Cardiac septum (tissue), 1 donor: ENCODE measurements at regions of chr17 and their contacts with region 1.

Region 1: GRCh38 chr17:40068917-40069750 is 6.4 kb downstream of the THRA start:
- DNase-seq: peak; percentile 95

Region 2: DNA sequence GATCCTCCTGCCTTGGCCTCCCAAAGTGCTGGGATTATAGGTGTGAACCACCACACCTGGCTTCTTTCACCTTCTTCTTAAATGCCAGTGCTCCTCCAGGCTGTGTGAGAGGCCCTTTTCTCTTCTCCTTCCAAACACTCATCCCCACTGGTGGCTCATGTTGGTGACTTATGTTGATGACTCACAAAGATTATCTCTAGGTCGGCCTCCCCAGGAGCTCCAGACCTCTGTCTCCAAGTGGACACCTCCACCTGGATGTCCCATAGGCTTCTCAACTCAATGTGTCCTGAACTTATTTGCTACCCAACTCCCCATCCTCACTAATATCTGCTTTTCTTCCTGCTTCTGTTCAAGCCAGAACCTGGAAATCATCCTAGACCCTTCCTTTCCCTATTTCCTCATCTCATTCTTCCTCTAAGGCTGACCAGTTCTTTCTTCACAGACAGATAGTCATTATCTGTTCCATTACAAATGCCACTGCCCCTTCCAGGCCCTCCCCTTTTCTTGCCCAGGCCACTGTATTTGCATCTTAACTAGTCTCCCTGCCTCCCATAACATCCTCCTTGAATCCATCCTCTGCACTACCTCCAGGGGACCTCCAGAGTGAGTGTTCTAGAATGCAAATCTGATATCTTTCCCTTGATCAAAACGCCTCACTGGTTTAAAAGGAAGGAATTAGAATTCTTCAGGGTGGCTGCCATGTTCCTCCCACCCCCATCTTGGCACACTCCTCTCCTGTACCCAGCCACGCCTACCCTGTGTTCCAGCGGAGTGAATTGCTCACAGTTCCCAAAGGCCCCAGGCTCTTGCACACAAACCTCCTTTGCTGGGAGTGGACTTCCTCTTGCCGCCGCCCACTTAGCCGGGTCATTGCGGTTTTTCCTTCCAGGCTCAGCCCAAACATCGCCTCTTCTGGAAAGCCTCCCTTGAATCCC is 1067.2 kb before region 1 on chr17:
- intact Hi-C with region 1: no loop called
- DNase-seq: peak; percentile 91

Region 3: GRCh38 chr17:39952680-39953470 is 116.3 kb before region 1 on chr17:
- intact Hi-C with region 1: no loop called
- DNase-seq: peak; percentile 100

Region 4: DNA sequence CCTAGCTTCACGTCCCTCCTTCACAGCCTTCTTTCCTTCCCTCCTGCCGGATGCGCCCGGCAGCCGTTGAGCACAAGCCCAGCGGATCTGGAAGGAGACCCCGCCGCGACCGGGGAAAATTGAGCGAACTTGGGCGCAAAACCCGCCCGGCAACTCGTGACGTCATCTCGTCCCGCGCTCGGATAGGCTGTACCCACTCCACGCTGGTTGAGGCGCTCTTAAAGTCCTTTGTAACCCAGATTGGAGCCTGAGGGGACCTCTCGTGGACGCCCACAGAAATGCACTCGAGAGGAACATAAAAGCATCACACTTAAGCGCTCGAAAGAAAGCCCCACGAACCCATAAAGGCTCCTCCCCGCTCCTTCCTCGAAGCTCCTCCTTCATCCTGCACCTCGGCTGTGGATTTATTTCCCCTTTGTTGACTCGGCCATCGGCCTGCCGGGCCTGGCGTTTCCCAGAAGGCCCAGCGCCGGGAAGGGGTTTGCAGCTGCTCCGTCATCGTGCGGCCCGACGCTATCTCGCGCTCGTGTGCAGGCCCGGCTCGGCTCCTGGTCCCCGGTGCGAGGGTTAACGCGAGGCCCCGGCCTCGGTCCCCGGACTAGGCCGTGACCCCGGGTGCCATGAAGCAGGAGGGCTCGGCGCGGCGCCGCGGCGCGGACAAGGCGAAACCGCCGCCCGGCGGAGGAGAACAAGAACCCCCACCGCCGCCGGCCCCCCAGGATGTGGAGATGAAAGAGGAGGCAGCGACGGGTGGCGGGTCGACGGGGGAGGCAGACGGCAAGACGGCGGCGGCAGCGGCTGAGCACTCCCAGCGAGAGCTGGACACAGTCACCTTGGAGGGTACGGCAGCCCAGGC is 88.6 kb before region 1 on chr17 and contains the start of gene PSMD3:
- intact Hi-C with region 1: no loop called
- DNase-seq: peak; percentile 98
- total RNA-seq, gene PSMD3: 85.2 TPM

Region 5: GRCh38 chr17:40098846-40099618 is 29.9 kb after region 1 on chr17:
- intact Hi-C with region 1: loop called (anchors 1 kb)
- DNase-seq: peak; percentile 100